SK-N-SH (cell line): ENCODE measurements at regions of chr4 and their contacts with region 1.

Region 1: GRCh38 chr4:77600521-77601451 is 4.8 kb upstream of the CXCL13 start:
- DNase-seq: peak; percentile 38
- H3K4me3 ChIP-seq: no peak overlapping the region
- H3K27ac ChIP-seq: no peak overlapping the region
- H3K4me1 ChIP-seq: no peaks in the 10 kb centered on the region
- H3K27me3 ChIP-seq: peaks cover 36% of the 10 kb centered on the region
- CTCF ChIP-seq: peak; percentile 89
- EP300 ChIP-seq: no peak
- RAD21 ChIP-seq: peak; percentile 63

Region 2: DNA sequence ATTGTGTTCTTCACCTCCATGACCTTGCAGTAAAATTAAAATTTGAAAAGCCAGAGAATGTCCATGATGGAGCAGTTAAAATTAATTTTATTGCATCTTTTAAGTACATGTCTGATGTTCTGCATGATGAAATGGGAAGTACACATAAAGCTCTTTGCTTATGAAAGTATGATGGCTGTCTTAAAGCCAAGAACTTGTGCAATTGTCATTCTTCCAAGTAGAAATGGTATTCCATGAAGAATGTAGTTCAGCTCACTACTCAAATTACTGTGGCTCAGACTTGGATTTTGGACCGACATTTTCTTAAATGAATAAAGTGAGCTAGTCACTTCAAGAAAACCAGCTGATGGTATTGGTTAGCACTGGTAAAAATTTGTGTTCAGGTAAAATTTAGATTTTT is 156.8 kb before region 1 on chr4:
- CTCF ChIA-PET with region 1: no interaction called
- POLR2A ChIA-PET with region 1: no interaction called
- DNase-seq: no peak
- H3K4me3 ChIP-seq: no peak overlapping the region
- H3K27ac ChIP-seq: no peak overlapping the region
- H3K4me1 ChIP-seq: no peaks in the 10 kb centered on the region
- H3K27me3 ChIP-seq: no peaks in the 10 kb centered on the region
- CTCF ChIP-seq: no peak
- EP300 ChIP-seq: no peak
- RAD21 ChIP-seq: no peak

Region 3: GRCh38 chr4:77613267-77613666 is 12.5 kb after region 1 on chr4:
- CTCF ChIA-PET with region 1: interaction called, 25 read pairs
- POLR2A ChIA-PET with region 1: no interaction called
- DNase-seq: no peak
- H3K4me3 ChIP-seq: no peak overlapping the region
- H3K27ac ChIP-seq: no peak overlapping the region
- H3K4me1 ChIP-seq: no peaks in the 10 kb centered on the region
- H3K27me3 ChIP-seq: peaks cover 37% of the 10 kb centered on the region
- CTCF ChIP-seq: no peak
- EP300 ChIP-seq: no peak
- RAD21 ChIP-seq: no peak

Region 4: DNA sequence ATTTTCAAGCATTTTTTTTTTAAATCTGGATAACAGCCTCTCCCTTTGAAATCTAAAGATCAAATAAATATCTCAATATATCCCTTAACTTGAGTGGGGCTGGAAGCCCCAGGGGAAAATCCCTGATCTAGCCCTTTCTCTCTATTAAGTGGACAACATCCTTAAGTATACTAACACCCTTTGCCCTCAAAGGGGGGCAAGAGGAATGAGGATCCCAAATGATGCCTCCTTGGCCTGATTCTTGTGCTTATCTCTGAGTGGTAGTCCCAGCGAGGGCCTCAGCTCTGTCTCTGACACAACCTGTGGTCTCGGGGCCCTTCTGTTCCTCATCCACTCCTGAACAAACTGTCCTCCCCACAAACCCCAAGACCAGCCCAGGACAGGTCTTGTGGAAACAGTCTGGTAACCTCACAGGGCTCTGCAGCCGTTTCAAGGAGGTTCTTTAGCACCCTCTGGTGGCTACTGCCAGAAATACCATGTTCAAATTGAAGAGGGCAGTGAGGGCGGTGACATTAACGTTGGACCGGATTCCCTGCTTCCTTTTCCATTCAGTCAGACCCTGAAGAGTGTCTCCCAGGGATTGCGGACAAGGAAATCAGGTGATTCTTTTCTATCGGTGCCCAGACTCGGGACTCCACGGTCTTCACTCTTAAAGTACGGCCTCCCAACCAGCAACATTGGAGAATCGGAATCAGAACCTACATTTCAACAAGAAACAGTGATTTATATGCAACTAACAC is 17.8 kb after region 1 on chr4:
- CTCF ChIA-PET with region 1: interaction called, 15 read pairs
- POLR2A ChIA-PET with region 1: no interaction called
- DNase-seq: peak; percentile 68
- H3K4me3 ChIP-seq: no peak overlapping the region; a peak in 1 of 4 replicates
- H3K27ac ChIP-seq: no peak overlapping the region
- H3K4me1 ChIP-seq: no peaks in the 10 kb centered on the region
- H3K27me3 ChIP-seq: peaks cover 25% of the 10 kb centered on the region; the same call in 1 of the 2 replicates
- CTCF ChIP-seq: peak; percentile 82
- EP300 ChIP-seq: no peak
- RAD21 ChIP-seq: peak; percentile 72

Region 5: GRCh38 chr4:77927991-77928925 is 327.5 kb after region 1 on chr4:
- CTCF ChIA-PET with region 1: no interaction called
- POLR2A ChIA-PET with region 1: no interaction called
- DNase-seq: no peak
- H3K4me3 ChIP-seq: no peak overlapping the region
- H3K27ac ChIP-seq: peak overlapping the region in 1 of 2 experiments; percentile 58; a peak in 2 of 4 replicates
- H3K4me1 ChIP-seq: peaks cover 0 to 12% of the 10 kb centered on the region in 2 experiments; a peak in 1 of 4 replicates
- H3K27me3 ChIP-seq: no peaks in the 10 kb centered on the region
- CTCF ChIP-seq: no peak
- EP300 ChIP-seq: no peak
- RAD21 ChIP-seq: no peak